Activated CD4-positive, alpha-beta memory T cell treated with anti-CD3 and anti-CD28 coated beads, Interleukin-2, amount 10 ng/mL, durations not matched to agents 7 days and 5 days (primary cell): ENCODE measurements at regions of chr9 and their contacts with region 1.

Region 1: DNA sequence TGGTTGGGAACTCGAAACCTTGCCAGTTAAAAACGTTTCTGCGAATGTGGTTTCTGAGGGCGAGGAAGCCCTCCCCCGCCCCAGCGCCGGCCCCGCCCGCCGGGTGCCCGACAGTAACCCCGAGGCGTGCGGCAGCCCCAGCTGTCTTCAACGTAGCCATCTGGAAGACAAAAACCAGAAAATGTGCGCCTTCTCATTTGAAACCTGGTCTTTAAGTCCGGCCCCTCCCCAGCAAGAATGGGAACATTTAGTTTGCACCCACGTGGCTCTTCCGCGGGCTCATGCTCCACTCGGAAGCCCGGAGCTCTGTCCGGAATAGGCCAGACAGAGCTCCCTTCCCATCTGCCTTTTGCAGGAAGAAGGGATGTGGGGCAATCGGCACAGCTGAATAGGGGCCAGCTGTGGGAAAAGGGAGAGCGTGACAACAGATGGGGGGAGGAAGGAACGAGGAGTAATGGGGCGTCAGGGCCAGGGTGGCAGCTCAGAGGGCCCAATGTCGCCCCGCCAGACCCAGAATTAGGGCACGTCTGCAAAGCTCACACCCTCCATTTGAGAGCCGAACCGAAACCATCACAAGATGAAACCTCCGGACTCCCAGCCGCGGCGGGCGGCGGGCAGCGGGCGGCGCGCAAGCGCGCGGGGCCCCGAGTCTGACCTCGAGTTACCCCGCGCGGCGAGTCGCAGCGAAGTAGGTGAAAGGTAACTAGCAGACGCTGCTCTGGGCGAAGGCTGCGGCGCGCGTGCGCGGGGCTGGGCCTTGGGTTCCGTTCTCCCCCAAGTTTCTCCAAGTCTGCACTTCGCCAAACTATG is 63.4 kb upstream of the ABCA1 start:
- DNase-seq: peak; percentile 87
- H3K4me3 Mint-ChIP-seq: peak overlapping the region; percentile 78
- H3K27ac Mint-ChIP-seq: peak overlapping the region; percentile 85
- H3K4me1 Mint-ChIP-seq: peaks cover 37% of the 10 kb centered on the region
- H3K27me3 Mint-ChIP-seq: peaks cover 42% of the 10 kb centered on the region

Region 2: DNA sequence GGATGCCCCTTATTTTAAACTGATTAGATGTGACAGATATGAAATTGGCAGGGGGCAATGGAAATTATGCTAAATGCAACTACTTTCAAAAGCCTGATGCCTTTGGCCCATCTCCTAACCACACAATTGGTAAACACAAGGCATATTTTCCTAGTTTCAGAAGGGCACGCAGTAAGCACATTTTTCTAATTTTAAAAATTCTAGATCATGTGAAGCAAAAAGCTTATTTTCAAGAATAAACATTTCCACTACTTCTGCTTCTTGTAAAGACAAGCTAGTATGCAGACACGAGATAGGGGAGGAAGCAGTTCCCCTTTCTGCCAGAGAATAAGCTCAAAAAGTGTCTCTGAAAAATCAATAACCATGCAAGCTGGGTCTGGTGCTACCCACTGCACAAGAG is 131.1 kb before region 1 on chr9:
- CTCF ChIA-PET with region 1: no interaction called
- POLR2A ChIA-PET with region 1: no interaction called
- DNase-seq: no peak
- H3K4me3 Mint-ChIP-seq: no peak overlapping the region
- H3K27ac Mint-ChIP-seq: no peak overlapping the region
- H3K4me1 Mint-ChIP-seq: no peaks in the 10 kb centered on the region
- H3K27me3 Mint-ChIP-seq: no peaks in the 10 kb centered on the region

Region 3: GRCh38 chr9:104927912-104928740 is 63.2 kb before region 1 on chr9 and contains the start of gene ABCA1:
- CTCF ChIA-PET with region 1: interaction called, 11 read pairs
- POLR2A ChIA-PET with region 1: interaction called, 20 read pairs
- DNase-seq: peak; percentile 67
- H3K4me3 Mint-ChIP-seq: peak within 1 kb of the TSS; percentile 80
- H3K27ac Mint-ChIP-seq: no peak within 1 kb of the TSS
- H3K4me1 Mint-ChIP-seq: peaks cover 24% of the 10 kb centered on the region
- H3K27me3 Mint-ChIP-seq: peaks cover 32% of the 10 kb centered on the region
- total RNA-seq, gene ABCA1: 0.93 to 1.6 TPM

Region 4: DNA sequence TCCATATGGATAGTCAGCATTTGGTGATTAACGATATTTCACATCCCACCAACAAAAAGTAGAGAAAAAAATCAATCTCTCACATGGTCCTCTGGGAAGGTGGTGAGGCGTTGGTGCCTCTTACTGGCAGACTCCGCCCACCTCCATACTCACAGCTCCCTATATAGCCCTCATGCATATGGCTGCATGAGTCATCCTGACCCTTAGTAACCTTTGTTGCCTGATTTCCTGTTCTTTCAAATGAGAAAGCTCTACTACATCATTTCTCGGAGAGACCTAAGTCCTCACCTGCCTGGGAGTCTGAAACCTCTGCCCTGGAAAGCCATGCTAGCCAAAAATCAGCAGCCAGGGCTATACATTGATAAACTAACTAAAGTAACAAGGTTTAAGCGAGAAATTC is 30.1 kb before region 1 on chr9:
- CTCF ChIA-PET with region 1: interaction called, 3 read pairs
- POLR2A ChIA-PET with region 1: interaction called, 14 read pairs
- DNase-seq: peak; percentile 71
- H3K4me3 Mint-ChIP-seq: peak overlapping the region; percentile 0
- H3K27ac Mint-ChIP-seq: peak overlapping the region; percentile 29
- H3K4me1 Mint-ChIP-seq: peaks cover 30% of the 10 kb centered on the region
- H3K27me3 Mint-ChIP-seq: no peaks in the 10 kb centered on the region

Region 5: DNA sequence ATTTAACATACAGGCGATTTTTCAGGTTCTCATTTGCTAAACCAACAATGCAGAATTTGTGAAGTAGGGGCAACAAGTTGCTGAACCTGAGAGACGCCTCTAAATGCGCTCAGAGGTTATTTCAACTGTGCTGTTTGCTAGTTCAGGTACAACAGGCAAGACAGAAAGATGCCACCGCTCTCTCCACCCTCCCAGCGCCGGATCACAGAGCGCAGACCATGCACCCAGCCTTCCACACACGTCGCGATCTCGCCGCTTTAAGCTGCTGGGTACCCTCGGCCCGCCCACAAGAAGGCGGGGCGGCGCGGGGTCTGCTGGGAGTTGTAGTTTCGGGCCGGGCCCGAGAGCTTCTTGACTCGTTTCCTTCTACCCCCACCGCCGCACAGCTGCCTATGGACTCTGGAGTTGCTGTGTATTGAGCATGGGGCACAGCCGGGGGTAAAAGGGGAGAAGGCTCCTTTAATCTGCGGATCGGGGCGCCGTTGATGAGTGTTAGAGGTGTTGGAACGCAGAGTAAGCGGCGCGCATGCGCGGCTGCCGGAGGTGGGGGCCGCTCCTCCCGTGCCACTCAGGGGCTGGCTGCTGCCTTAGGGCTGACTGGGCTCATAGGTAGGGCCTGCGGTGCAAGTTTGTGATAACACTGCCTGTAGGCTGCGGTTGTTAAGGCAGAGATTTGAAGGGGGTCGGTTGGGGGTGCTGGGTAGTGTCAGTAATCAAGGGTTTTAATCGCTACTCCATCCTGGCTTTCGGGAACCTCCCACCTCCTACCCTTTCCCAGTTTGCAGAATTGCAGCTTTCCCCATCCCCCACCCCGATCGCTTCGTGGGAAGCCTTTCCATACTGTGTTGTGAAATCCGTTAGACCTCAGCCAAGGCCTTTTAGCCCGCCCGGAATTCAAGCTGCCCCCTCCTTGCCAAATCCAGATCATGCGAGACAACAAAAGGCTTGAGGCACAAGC is 23.0 kb before region 1 on chr9:
- CTCF ChIA-PET with region 1: interaction called, 3 read pairs
- POLR2A ChIA-PET with region 1: interaction called, 14 read pairs
- DNase-seq: peak; percentile 89
- H3K4me3 Mint-ChIP-seq: peak overlapping the region; percentile 79
- H3K27ac Mint-ChIP-seq: peak overlapping the region; percentile 36
- H3K4me1 Mint-ChIP-seq: peaks cover 10% of the 10 kb centered on the region
- H3K27me3 Mint-ChIP-seq: peaks cover 22% of the 10 kb centered on the region

Region 6: DNA sequence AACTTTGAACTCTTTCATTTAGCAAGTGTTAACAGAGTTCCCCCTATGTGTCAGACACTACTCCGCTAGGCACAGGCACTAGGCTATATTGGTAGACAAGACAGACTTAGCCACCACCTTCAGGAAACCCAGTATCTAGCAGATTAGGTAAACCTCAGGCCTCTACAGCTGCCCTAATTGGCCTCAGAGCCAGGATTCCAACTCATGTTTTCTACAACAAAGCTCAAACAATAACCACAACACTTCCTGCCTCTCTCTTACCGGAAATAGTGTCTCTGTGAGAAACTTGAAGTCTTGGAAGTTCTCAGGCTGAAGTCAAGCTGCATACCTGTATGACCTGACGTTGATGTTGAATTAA is 136.5 kb after region 1 on chr9:
- CTCF ChIA-PET with region 1: interaction called, 4 read pairs
- POLR2A ChIA-PET with region 1: interaction called, 12 read pairs
- DNase-seq: peak; percentile 75
- H3K4me3 Mint-ChIP-seq: no peak overlapping the region
- H3K27ac Mint-ChIP-seq: peak overlapping the region; percentile 54
- H3K4me1 Mint-ChIP-seq: peaks cover 32% of the 10 kb centered on the region
- H3K27me3 Mint-ChIP-seq: peaks cover 16% of the 10 kb centered on the region